ENCODE measurements at regions of chr11 and their contacts with region 1.

Region 1: DNA sequence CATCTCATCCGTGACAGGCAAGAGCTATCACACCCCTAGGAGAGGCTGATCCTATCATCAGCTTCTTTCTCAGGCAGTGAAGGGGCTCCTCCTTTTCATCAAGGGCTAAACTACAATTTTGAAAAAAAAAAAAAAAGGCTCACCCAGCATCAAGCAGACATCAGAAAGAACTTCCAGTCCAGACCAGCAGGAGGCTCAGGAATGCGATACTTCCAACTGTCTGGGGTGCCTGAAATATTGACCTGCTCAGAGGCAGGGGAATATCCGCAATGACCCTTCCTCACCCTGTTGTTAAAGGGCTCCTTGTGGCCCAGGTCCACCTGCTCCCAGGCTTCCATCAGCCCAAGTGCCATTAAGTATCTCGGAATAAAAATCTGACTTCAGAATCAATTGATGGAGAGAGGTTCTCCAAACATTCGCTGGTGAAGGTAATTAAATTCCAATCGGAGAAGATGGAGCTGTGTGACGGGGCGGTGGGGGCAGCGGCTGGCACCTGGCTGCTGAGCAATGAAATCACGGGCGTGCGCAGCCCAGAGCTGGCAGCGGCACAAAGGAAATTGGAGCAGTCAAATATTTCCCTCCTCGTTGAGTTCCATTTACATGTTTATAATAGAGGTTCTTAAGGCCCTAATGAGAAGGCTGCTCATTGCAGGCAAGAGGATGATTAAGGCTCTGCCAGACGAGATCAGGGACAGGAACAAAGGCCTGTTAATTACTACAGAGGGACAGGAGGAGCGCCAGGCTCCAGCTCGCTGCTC is 69.0 kb upstream of the THY1 start:
- DNase-seq: peak in 1 of 3 donors; percentile 39
- H3K4me3 ChIP-seq: no peak overlapping the region
- H3K4me3 Mint-ChIP-seq: no peak overlapping the region
- H3K27ac ChIP-seq: no peak overlapping the region
- H3K27ac Mint-ChIP-seq: no peak overlapping the region
- H3K4me1 ChIP-seq: no peaks in the 10 kb centered on the region
- H3K4me1 Mint-ChIP-seq: peaks cover 2% of the 10 kb centered on the region
- H3K27me3 ChIP-seq: no peaks in the 10 kb centered on the region
- H3K27me3 Mint-ChIP-seq: peaks cover 13 to 15% (median 14%) of the 10 kb centered on the region in 3 donors
- CTCF ChIP-seq: peak; percentile 44

Region 2: DNA sequence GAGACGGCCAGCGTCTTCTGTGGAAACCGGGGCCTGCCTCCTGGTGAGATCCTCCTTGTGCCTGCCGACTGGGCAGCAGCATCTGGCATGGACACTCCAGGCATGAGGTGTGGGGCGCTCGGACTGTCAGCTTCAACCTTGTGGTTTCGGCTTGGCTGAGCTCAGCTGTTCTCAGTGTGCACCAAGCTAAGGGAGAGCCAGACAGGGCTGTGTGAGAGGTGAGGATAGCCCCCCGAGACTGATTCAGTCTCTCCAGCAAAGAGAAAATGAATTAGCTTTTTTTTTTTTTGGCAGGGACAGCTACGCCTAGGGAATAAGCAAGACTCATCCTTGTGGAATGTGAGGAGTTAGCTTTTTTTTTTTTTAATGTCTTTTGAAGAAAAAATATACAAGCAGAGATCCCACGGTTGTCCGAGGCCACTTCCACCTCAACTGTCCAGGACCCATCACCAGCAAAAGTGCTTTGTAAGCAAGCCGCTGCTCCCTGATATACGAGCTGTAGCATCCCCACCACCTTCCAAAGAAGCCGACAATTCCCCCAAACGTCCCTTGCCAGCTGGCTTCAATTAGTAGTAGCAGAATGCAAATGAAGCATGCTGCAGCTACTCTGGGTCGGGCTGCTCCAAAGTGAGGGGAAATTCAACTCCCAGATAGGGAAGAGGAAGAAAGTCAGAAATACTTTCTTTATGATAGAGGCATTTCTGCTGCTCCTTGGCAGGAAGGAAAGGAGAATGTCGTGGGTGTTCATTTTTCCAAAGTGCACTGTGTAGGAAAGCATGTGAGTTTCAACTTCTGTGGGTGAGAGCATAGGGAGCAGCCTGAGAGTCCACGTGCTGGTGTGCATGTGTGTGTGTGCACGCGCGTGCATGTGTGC is 59.2 kb before region 1 on chr11:
- intact Hi-C with region 1: no loop called
- DNase-seq: no peak
- H3K4me3 ChIP-seq: no peak overlapping the region
- H3K4me3 Mint-ChIP-seq: no peak overlapping the region
- H3K27ac ChIP-seq: no peak overlapping the region
- H3K27ac Mint-ChIP-seq: peak overlapping the region in 1 of 7 donors; percentile 11
- H3K4me1 ChIP-seq: no peaks in the 10 kb centered on the region
- H3K4me1 Mint-ChIP-seq: no peaks in the 10 kb centered on the region
- H3K27me3 ChIP-seq: no peaks in the 10 kb centered on the region
- H3K27me3 Mint-ChIP-seq: peaks cover 7 to 23% (median 13%) of the 10 kb centered on the region in 3 donors
- CTCF ChIP-seq: no peak

Region 3: GRCh38 chr11:119550053-119550752 is 58.3 kb after region 1 on chr11:
- intact Hi-C with region 1: no loop called
- DNase-seq: peak; percentile 36 to 57 (median 45)
- H3K4me3 ChIP-seq: peak overlapping the region in 1 of 3 experiments; percentile 1
- H3K4me3 Mint-ChIP-seq: no peak overlapping the region
- H3K27ac ChIP-seq: peak overlapping the region in 1 of 2 donors; percentile 64
- H3K27ac Mint-ChIP-seq: peak overlapping the region in 4 of 7 donors; percentile 30 to 63 (median 44)
- H3K4me1 ChIP-seq: peaks cover 7 to 8% of the 10 kb centered on the region in 2 donors
- H3K4me1 Mint-ChIP-seq: peaks cover 11% of the 10 kb centered on the region
- H3K27me3 ChIP-seq: no peaks in the 10 kb centered on the region
- H3K27me3 Mint-ChIP-seq: peaks cover 0 to 2% (median 0%) of the 10 kb centered on the region in 3 donors
- CTCF ChIP-seq: no peak

Region 4: GRCh38 chr11:119615003-119615881 is 123.3 kb after region 1 on chr11:
- intact Hi-C with region 1: loop called (anchors 5 to 10 kb)
- DNase-seq: peak; percentile 59 to 89 (median 85)
- H3K4me3 ChIP-seq: peak overlapping the region in 1 of 3 experiments; percentile 27
- H3K4me3 Mint-ChIP-seq: peak overlapping the region in 1 of 2 donors; percentile 67
- H3K27ac ChIP-seq: peak overlapping the region; percentile 83 to 88
- H3K27ac Mint-ChIP-seq: peak overlapping the region; percentile 88 to 96 (median 94)
- H3K4me1 ChIP-seq: peaks cover 49% of the 10 kb centered on the region in 2 donors
- H3K4me1 Mint-ChIP-seq: peaks cover 51% of the 10 kb centered on the region
- H3K27me3 ChIP-seq: no peaks in the 10 kb centered on the region
- H3K27me3 Mint-ChIP-seq: peaks cover 0 to 7% (median 0%) of the 10 kb centered on the region in 3 donors
- CTCF ChIP-seq: no peak

Measured in CD14-positive monocyte (primary cell).